Activated naive CD4-positive, alpha-beta T cell treated with anti-CD3 and anti-CD28 coated beads for 36 hours (primary cell): ENCODE measurements at regions of chr6 and their contacts with region 1.

Region 1: GRCh38 chr6:42021847-42022754 is 28.2 kb upstream of the TAF8 start:
- DNase-seq: peak; percentile 91
- H3K4me3 Mint-ChIP-seq: peak overlapping the region; percentile 63
- H3K27ac Mint-ChIP-seq: peak overlapping the region; percentile 99
- H3K4me1 Mint-ChIP-seq: peaks cover 89% of the 10 kb centered on the region
- H3K27me3 Mint-ChIP-seq: no peaks in the 10 kb centered on the region

Region 2: DNA sequence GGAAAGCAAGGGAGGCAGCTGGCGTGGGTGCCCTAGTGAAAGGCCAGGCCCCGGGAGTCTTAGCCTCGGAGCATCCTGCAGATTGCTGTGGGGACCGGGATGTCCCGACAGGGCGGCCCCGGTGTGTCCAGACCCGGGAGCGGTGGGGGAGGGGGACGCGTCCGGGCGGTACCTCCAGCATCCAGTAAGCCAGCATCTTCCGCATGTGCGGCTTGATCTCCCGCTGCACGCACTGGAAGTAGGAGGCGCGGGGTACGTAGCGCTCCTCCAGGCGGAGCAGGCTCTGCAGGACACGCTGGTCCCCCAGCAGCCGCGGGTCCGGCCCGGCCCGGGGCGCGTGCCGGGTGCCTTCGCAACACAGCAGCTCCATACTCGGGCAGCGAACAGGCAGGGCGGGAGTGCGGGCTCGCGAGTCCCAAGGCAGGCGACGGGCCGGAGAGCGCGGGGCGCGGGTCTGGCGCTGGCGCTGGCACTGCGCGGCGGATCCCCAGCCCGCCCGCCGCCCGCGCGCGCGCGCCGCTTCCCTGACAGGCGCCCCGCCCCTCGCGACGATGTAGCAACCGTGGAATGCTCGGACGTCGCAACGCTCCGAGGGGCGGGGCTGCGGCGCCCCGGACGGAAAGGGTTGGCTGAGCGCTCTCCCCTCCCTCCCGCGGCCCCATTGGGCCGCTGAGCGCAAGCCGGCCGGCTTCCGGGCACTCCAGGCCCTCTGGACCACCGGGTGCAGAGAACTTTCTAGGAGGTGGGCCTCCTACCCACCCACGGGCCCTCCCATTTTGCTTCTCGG is 80.6 kb before region 1 on chr6 and contains the start of gene CCND3:
- CTCF ChIA-PET with region 1: no interaction called
- intact Hi-C with region 1: loop called (anchors 1 kb)
- DNase-seq: peak; percentile 93
- H3K4me3 Mint-ChIP-seq: peak within 1 kb of the TSS; percentile 100
- H3K27ac Mint-ChIP-seq: peak within 1 kb of the TSS; percentile 99
- H3K4me1 Mint-ChIP-seq: peaks cover 47% of the 10 kb centered on the region
- H3K27me3 Mint-ChIP-seq: no peaks in the 10 kb centered on the region
- total RNA-seq, gene CCND3: 1,152 to 1,165 TPM

Region 3: GRCh38 chr6:42053601-42054000 is 31.5 kb after region 1 on chr6:
- CTCF ChIA-PET with region 1: no interaction called
- intact Hi-C with region 1: no loop called
- DNase-seq: no peak
- H3K4me3 Mint-ChIP-seq: no peak overlapping the region
- H3K27ac Mint-ChIP-seq: no peak overlapping the region
- H3K4me1 Mint-ChIP-seq: peaks cover 41% of the 10 kb centered on the region
- H3K27me3 Mint-ChIP-seq: no peaks in the 10 kb centered on the region

Region 4: GRCh38 chr6:42322676-42323075 is 300.6 kb after region 1 on chr6:
- CTCF ChIA-PET with region 1: no interaction called
- intact Hi-C with region 1: no loop called
- DNase-seq: no peak
- H3K4me3 Mint-ChIP-seq: no peak overlapping the region
- H3K27ac Mint-ChIP-seq: no peak overlapping the region
- H3K4me1 Mint-ChIP-seq: peaks cover 14% of the 10 kb centered on the region
- H3K27me3 Mint-ChIP-seq: no peaks in the 10 kb centered on the region